H1 (cell line): ENCODE measurements at regions of chr4 and their contacts with region 1.

Region 1: GRCh38 chr4:127400731-127401346 is 231.9 kb upstream of the INTU start:
- DNase-seq: peak; percentile 19 to 68
- H3K4me3 ChIP-seq: no peak overlapping the region
- H3K27ac ChIP-seq: no peak overlapping the region
- H3K4me1 ChIP-seq: no peaks in the 10 kb centered on the region
- H3K27me3 ChIP-seq: no peaks in the 10 kb centered on the region
- CTCF ChIP-seq: peak in 2 of 3 experiments; percentile 78 to 82; a peak in 3 of 4 replicates
- EP300 ChIP-seq: no peak
- POLR2A ChIP-seq: no peak
- RAD21 ChIP-seq: peak; percentile 96

Region 2: DNA sequence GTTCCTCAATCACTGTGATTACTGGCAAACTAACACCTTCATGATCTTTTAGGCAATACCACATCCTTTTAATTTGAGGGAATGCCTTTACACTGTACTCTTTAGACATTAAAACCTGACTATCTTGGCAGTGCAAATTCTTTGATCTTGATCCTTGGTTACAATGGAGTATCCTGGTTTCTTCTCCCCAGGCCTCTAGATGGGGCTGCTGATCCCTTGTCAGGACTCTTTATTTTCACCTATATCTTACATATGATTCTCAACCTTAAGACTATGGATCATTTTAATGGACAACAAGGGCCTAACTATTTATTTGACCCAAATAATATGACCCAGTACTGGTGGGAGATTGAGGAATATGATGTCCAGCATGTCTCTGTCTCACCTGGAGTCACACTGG is 773.6 kb before region 1 on chr4:
- CTCF ChIA-PET with region 1: interaction called, 14 read pairs
- POLR2A ChIA-PET with region 1: no interaction called
- DNase-seq: no peak
- H3K4me3 ChIP-seq: no peak overlapping the region
- H3K27ac ChIP-seq: no peak overlapping the region
- H3K4me1 ChIP-seq: no peaks in the 10 kb centered on the region
- H3K27me3 ChIP-seq: no peaks in the 10 kb centered on the region
- CTCF ChIP-seq: peak in 2 of 3 experiments; percentile 41 to 64; a peak in 3 of 4 replicates
- EP300 ChIP-seq: no peak
- POLR2A ChIP-seq: no peak
- RAD21 ChIP-seq: peak; percentile 67 to 71

Region 3: GRCh38 chr4:127155116-127155515 is 245.7 kb before region 1 on chr4:
- CTCF ChIA-PET with region 1: no interaction called
- POLR2A ChIA-PET with region 1: no interaction called
- DNase-seq: no peak
- H3K4me3 ChIP-seq: no peak overlapping the region
- H3K27ac ChIP-seq: no peak overlapping the region
- H3K4me1 ChIP-seq: no peaks in the 10 kb centered on the region
- H3K27me3 ChIP-seq: no peaks in the 10 kb centered on the region
- CTCF ChIP-seq: no peak
- EP300 ChIP-seq: no peak
- POLR2A ChIP-seq: no peak
- RAD21 ChIP-seq: no peak

Region 4: DNA sequence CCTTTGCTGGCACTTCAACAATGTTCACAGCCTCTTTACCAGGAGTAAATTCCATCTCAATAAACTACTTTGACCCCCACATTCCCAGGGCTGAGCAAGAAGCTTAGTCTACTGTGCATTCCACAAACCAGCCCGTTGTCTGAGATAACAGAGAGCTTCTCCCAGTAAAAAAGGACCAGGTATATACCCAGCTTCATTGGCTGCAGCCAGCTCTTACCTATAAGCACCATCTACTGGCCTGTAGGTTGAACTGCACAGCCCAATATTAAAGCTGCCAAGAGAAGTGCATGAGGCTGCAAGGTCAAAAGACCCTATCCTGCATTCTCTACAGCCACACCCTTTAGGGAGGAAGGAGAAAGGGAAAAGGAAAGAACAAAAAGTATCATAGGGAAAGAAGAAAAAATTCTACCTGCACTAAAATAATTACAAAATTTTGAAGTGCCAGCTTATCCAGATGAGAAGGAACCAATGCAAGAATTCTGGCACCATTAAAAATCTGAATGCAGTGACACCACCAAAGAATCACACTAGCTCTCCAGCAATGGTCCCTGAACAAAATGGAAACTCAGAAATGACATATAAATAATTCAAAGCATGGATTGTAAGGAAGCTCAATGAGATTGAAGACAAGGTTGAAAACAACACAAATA is 186.2 kb after region 1 on chr4:
- CTCF ChIA-PET with region 1: interaction called, 12 read pairs
- POLR2A ChIA-PET with region 1: no interaction called
- DNase-seq: no peak
- H3K4me3 ChIP-seq: no peak overlapping the region
- H3K27ac ChIP-seq: no peak overlapping the region
- H3K4me1 ChIP-seq: no peaks in the 10 kb centered on the region
- H3K27me3 ChIP-seq: no peaks in the 10 kb centered on the region
- CTCF ChIP-seq: peak in 2 of 3 experiments; percentile 79 to 87; a peak in 3 of 4 replicates
- EP300 ChIP-seq: no peak
- POLR2A ChIP-seq: no peak
- RAD21 ChIP-seq: peak; percentile 88 to 93

Region 5: GRCh38 chr4:127708985-127709384 is 308.1 kb after region 1 on chr4:
- CTCF ChIA-PET with region 1: no interaction called
- POLR2A ChIA-PET with region 1: no interaction called
- DNase-seq: no peak
- H3K4me3 ChIP-seq: no peak overlapping the region
- H3K27ac ChIP-seq: no peak overlapping the region
- H3K4me1 ChIP-seq: no peaks in the 10 kb centered on the region
- H3K27me3 ChIP-seq: no peaks in the 10 kb centered on the region
- CTCF ChIP-seq: no peak
- EP300 ChIP-seq: no peak
- POLR2A ChIP-seq: no peak
- RAD21 ChIP-seq: no peak